ENCODE measurements at regions of chr9 and their contacts with region 1.

Region 1: GRCh38 chr9:121213136-121213806 is 11.6 kb upstream of the RAB14 start:
- DNase-seq: no peak
- ATAC-seq: peak; percentile 63
- H3K4me3 ChIP-seq: no peak overlapping the region
- H3K27ac ChIP-seq: no peak overlapping the region
- H3K4me1 ChIP-seq: peaks cover 5% of the 10 kb centered on the region
- H3K27me3 ChIP-seq: no peaks in the 10 kb centered on the region
- CTCF ChIP-seq: peak; percentile 92 to 96 (median 96); a peak in 5 of 6 replicates
- EP300 ChIP-seq: no peak
- POLR2A ChIP-seq: no peak
- RAD21 ChIP-seq: peak; percentile 90

Region 2: DNA sequence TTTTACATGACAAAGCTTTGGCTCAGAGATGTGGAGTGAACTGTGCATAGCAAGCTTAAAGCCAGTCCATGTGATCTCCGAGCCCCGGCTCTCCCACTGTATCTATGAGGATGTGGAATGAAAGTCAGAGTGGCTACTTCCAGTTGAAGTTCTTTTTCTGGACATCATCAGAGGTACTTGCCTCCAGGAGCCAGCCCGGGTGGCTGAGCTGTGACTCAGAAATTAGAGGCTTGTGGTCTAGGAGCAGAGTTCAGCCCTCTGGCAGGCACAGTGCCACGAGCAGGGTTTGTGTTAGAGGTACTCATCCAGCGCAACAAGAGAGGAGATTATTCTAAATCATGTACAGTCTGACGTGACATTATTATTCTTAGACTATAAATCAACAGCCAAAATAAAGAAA is 955.8 kb before region 1 on chr9:
- CTCF ChIA-PET with region 1: no interaction called
- POLR2A ChIA-PET with region 1: no interaction called
- RAD21 ChIA-PET with region 1: no interaction called
- SMC1A ChIA-PET with region 1: no interaction called
- in situ Hi-C with region 1: no loop called
- intact Hi-C with region 1: no loop called
- DNase-seq: no peak
- ATAC-seq: peak; percentile 42; the same call in 2 of the 3 replicates
- H3K4me3 ChIP-seq: no peak overlapping the region
- H3K27ac ChIP-seq: no peak overlapping the region
- H3K4me1 ChIP-seq: no peaks in the 10 kb centered on the region
- H3K27me3 ChIP-seq: no peaks in the 10 kb centered on the region; a peak in 2 of 4 replicates
- CTCF ChIP-seq: no peak
- EP300 ChIP-seq: no peak
- POLR2A ChIP-seq: no peak
- RAD21 ChIP-seq: no peak

Region 3: DNA sequence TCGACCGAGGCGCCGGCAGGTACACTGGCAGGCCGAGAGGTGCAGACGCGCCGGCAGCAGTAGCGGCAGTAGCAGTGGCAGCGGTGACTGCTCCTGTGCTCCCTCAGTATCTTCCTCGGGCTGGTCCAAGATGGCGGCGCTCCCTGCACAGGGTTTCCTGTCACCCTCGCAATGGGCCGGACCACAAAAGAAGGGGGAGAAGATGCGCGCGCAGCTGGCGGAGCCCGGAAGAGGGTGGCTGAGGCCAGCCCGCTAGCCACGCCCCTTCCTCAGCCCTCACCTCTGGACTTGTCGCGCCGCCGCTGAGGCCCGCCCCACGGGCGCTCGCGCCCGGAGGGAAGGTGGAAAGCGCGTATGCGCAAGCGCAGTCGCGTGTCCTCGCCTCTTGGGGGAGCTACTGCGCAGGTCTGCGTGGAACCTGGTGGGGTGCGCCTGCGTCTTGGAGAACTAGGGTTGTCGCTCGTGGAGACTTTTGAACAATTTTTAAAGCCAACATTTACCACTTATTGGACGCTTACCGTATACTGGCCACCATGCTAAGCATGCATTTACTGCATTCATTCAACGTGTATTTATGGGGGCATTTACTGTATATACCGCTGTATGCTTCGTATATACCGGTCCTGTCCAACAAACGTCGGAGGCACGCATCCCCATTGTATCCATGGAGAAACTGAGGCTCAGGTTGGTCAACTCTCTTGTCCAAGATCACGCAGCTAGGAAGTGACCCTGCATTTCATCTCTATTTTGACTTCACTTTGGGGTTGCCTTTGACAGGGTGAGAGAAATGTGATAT is 11.3 kb before region 1 on chr9 and contains the start of gene RAB14:
- CTCF ChIA-PET with region 1: interaction called, 34 read pairs
- POLR2A ChIA-PET with region 1: interaction called, 6 read pairs
- RAD21 ChIA-PET with region 1: interaction called, 10 read pairs
- SMC1A ChIA-PET with region 1: interaction called, 33 read pairs
- in situ Hi-C with region 1: no loop called
- intact Hi-C with region 1: no loop called
- DNase-seq: peak; percentile 96
- ATAC-seq: peak; percentile 85
- H3K4me3 ChIP-seq: peak within 1 kb of the TSS; percentile 90
- H3K27ac ChIP-seq: peak within 1 kb of the TSS; percentile 92
- H3K4me1 ChIP-seq: peaks cover 14% of the 10 kb centered on the region
- H3K27me3 ChIP-seq: no peaks in the 10 kb centered on the region
- CTCF ChIP-seq: peak; percentile 58 to 78 (median 69); a peak in 5 of 6 replicates
- EP300 ChIP-seq: no peak
- POLR2A ChIP-seq: peak; percentile 99
- RAD21 ChIP-seq: no peak
- polyA plus RNA-seq, gene RAB14: 21.3 to 26.0 TPM

Region 4: DNA sequence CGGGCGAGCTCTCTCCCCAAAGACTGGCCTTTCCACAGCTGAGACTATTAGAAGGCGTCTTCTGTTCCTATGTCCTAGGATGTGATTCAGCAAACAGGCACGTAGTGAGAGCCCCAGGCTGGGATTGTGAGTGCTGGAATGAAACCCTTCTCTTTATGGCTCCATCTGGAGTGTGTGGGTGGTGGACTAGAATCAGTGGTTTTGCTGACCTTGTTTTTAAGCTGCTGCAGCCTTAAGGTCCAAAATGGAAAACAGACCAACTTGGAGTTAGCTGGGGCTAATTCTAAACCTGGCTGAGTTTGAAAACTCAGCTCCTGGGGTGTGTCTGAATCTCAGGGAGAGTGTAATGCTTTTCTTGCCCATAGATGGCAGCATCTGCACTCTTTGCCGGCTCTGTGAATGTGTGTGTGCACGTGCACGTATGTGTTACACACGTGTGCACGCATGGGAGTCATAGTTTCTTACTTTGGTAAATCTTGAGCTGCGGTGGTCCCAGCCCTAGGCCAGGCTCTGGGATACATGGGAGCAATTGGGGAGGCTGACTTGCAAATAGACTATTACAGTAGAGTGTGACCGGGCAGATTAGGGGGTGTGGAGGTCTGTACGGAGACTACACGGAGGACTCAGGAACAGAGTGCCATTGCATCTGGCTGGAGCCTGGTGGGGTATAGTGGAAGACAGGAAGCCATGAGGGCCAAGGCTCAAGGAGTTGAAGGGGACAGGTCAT is 65.4 kb after region 1 on chr9:
- CTCF ChIA-PET with region 1: interaction called, 41 read pairs
- POLR2A ChIA-PET with region 1: interaction called, 3 read pairs
- RAD21 ChIA-PET with region 1: interaction called, 10 read pairs
- SMC1A ChIA-PET with region 1: interaction called, 16 read pairs
- in situ Hi-C with region 1: no loop called
- intact Hi-C with region 1: no loop called
- DNase-seq: peak; percentile 11
- ATAC-seq: peak; percentile 95
- H3K4me3 ChIP-seq: no peak overlapping the region
- H3K27ac ChIP-seq: no peak overlapping the region
- H3K4me1 ChIP-seq: peaks cover 5% of the 10 kb centered on the region; the same call in 1 of the 2 replicates
- H3K27me3 ChIP-seq: no peaks in the 10 kb centered on the region
- CTCF ChIP-seq: peak; percentile 60 to 79 (median 62)
- EP300 ChIP-seq: no peak
- POLR2A ChIP-seq: no peak
- RAD21 ChIP-seq: peak; percentile 48

Region 5: GRCh38 chr9:121376214-121376830 is 163.1 kb after region 1 on chr9:
- CTCF ChIA-PET with region 1: interaction called, 28 read pairs
- POLR2A ChIA-PET with region 1: interaction called, 3 read pairs
- RAD21 ChIA-PET with region 1: interaction called, 7 read pairs
- SMC1A ChIA-PET with region 1: interaction called, 9 read pairs
- in situ Hi-C with region 1: no loop called
- intact Hi-C with region 1: loop called (anchors 5 kb)
- DNase-seq: no peak
- ATAC-seq: no peak
- H3K4me3 ChIP-seq: no peak overlapping the region
- H3K27ac ChIP-seq: no peak overlapping the region
- H3K4me1 ChIP-seq: no peaks in the 10 kb centered on the region
- H3K27me3 ChIP-seq: no peaks in the 10 kb centered on the region; a peak in 1 of 4 replicates
- CTCF ChIP-seq: peak in 1 of 3 experiments; percentile 9; a peak in 2 of 6 replicates
- EP300 ChIP-seq: no peak
- POLR2A ChIP-seq: no peak
- RAD21 ChIP-seq: peak; percentile 37; the same call in 1 of the 2 replicates

Region 6: DNA sequence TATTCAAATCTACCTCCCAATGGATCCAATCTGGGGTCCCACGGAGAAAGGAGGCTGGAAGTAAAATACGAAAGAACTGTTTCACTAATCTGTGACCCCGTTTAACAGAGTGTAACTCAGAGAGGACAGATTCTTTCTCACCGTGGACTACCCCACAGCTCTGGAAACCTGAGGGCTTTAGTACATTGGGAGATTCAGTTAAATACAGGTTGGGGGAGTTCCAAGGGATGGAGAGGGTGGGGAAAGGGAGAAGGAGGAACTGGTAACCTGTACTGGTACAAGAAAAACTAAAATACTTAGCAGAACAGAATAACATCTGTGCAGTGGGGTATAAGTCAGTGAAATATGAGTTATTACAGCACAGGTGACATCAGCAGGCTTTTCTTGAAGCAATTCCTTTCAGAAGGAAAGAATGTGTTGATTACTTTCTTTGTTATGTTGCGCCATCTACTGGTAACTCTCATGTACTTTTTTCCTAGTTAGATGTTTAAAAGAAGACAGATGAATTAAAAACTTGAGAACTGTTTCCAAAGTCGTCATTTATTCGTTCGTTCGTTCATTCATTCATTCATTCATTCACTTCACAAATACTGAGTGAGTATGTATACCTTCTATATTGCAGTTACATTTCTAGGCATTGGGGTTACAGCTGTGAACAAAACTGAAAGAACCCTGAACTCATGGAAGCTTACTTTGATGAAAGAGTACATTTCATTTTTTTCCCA is 186.8 kb after region 1 on chr9:
- CTCF ChIA-PET with region 1: interaction called, 58 read pairs
- POLR2A ChIA-PET with region 1: no interaction called
- RAD21 ChIA-PET with region 1: interaction called, 6 read pairs
- SMC1A ChIA-PET with region 1: interaction called, 11 read pairs
- in situ Hi-C with region 1: loop called (anchors 5 kb)
- intact Hi-C with region 1: loop called (anchors 2 kb)
- DNase-seq: peak; percentile 26
- ATAC-seq: peak; percentile 80
- H3K4me3 ChIP-seq: no peak overlapping the region
- H3K27ac ChIP-seq: no peak overlapping the region
- H3K4me1 ChIP-seq: no peaks in the 10 kb centered on the region
- H3K27me3 ChIP-seq: no peaks in the 10 kb centered on the region
- CTCF ChIP-seq: peak; percentile 33 to 68 (median 46); a peak in 5 of 6 replicates
- EP300 ChIP-seq: no peak
- POLR2A ChIP-seq: no peak
- RAD21 ChIP-seq: peak; percentile 79

Measured in GM12878 (cell line).